Body of pancreas (tissue), 4 donors: ENCODE measurements at regions of chr18 and their contacts with region 1.

Region 1: DNA sequence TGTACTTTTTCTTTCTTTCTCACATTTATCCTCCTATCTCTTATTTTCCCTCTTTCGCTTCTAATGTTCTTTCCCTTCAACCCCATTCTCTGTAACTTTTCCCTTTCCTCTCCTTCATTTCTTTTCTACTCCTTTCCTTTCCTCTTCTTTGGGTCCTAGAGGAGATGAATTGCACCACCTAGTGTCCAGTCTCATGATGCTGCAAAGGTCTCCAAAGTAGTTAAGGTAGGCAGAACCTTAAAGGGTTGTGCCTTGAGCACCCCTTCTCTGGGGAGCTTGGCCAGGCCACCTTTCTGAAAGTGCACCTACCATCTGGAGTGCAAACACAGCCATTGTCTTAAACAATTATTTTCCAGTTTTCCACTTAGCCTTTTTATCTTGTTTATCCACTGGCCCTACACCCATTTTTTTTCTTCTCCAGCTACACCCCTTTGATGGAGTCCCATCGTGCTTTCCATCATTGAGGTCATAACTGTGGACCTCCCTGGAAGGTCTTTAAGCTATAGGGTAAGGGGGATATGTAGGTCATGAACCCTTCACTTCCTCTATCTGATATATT is 156.0 kb downstream of the ESCO1 start:
- DNase-seq: peak; percentile 14 to 51 (median 32)
- ATAC-seq: no peak
- H3K4me3 ChIP-seq: no peak overlapping the region
- H3K27ac ChIP-seq: no peak overlapping the region
- H3K4me1 ChIP-seq: no peaks in the 10 kb centered on the region
- H3K27me3 ChIP-seq: peaks cover 0 to 5% of the 10 kb centered on the region in 2 donors
- CTCF ChIP-seq: peak in 6 of 7 experiments; percentile 55 to 79 (median 63)
- POLR2A ChIP-seq: no peak

Region 2: GRCh38 chr18:21191596-21192307 is 252.8 kb before region 1 on chr18:
- intact Hi-C with region 1: loop called (anchors 5 kb)
- DNase-seq: peak in 3 of 4 donors; percentile 27 to 47 (median 30)
- ATAC-seq: no peak
- H3K4me3 ChIP-seq: no peak overlapping the region
- H3K27ac ChIP-seq: no peak overlapping the region
- H3K4me1 ChIP-seq: no peaks in the 10 kb centered on the region
- H3K27me3 ChIP-seq: no peaks in the 10 kb centered on the region
- CTCF ChIP-seq: peak in 3 of 7 experiments; percentile 16 to 24 (median 20)
- POLR2A ChIP-seq: no peak